ENCODE measurements at regions of chr12 and their contacts with region 1.

Region 1: GRCh38 chr12:125065021-125065795 is at the start of gene AACS:
- DNase-seq: peak; percentile 75
- H3K4me3 ChIP-seq: peak within 1 kb of the TSS; percentile 69 to 84 (median 74)
- H3K27ac ChIP-seq: peak within 1 kb of the TSS; percentile 44
- H3K4me1 ChIP-seq: peaks cover 15% of the 10 kb centered on the region
- H3K27me3 ChIP-seq: no peaks in the 10 kb centered on the region
- CTCF ChIP-seq: peak in 1 of 2 donors; percentile 3
- total RNA-seq, gene AACS: 35.1 to 36.0 TPM

Region 2: DNA sequence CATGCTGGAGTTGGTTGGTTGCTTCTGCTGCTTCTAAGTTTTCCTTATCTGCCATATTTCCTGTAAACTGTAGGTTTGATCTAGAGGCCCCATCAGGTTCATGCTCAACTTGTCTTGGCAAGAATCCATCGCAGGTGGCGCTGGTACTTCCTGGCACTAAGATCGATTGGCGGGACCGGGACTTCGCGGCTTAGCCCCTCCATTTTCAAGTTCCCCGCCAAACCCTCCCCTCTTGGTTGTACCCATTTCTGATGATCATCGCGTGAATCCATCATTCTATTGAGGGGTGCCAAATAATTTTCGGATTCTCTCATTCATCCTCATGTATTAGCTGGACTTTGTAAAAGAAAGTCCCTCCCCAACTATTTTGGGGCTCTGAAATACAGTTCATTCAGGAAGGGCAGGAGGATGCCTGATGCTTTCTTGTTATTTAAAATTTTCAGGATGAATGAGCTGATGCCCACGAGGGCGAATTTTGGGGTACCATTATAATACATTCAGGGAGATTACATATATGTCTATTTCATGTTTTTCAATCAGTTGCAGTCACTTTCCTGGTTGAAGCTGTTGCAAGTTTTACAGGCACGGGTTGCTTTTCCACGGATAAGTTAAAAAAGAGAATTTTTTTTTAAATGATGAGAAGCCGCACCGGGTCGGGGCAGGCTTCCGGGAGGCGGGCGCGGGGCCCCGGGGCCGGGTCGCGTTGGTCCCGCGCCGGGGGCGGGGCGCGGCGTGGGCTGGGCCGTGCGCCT is 72.2 kb before region 1 on chr12:
- CTCF ChIA-PET with region 1: no interaction called
- dilution Hi-C with region 1: no loop called
- in situ Hi-C with region 1: no loop called
- intact Hi-C with region 1: loop called (anchors 2 kb)
- DNase-seq: peak; percentile 68
- H3K4me3 ChIP-seq: peak overlapping the region; percentile 68 to 89 (median 79)
- H3K27ac ChIP-seq: peak overlapping the region; percentile 12
- H3K4me1 ChIP-seq: peaks cover 17% of the 10 kb centered on the region
- H3K27me3 ChIP-seq: no peaks in the 10 kb centered on the region
- CTCF ChIP-seq: peak; percentile 35 to 53

Region 3: DNA sequence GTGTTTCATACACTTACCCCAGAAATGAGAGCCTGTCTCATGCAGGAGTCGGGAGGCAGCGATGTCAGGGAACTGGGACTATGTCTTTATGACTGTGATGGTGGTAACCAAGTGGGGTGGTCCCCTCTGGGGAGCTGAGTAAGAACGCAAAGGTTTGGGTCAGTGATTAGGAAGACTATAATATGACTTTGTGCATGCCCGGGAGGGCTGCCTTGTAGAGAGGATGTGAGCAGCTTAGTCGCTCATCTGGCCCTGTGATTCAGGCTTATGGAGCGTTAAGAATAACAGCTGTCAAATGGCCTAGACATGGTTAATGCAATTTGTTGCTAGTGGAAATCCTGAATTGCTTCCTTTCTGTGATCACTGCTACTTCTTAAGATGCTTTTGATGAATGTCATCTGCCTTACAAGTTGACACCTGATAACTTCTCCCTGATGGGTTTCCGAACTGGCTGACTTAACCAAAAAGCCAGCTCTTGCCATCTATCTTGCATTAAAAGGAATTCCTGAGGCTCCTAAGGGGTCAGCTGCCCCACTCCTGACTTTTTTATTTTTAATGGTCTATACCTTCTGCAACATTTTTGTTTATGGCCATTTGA is 35.3 kb before region 1 on chr12:
- CTCF ChIA-PET with region 1: no interaction called
- dilution Hi-C with region 1: loop called (anchors 5 kb)
- in situ Hi-C with region 1: no loop called
- intact Hi-C with region 1: no loop called
- DNase-seq: no peak
- H3K4me3 ChIP-seq: no peak overlapping the region
- H3K27ac ChIP-seq: no peak overlapping the region
- H3K4me1 ChIP-seq: no peaks in the 10 kb centered on the region
- H3K27me3 ChIP-seq: no peaks in the 10 kb centered on the region
- CTCF ChIP-seq: no peak

Region 4: DNA sequence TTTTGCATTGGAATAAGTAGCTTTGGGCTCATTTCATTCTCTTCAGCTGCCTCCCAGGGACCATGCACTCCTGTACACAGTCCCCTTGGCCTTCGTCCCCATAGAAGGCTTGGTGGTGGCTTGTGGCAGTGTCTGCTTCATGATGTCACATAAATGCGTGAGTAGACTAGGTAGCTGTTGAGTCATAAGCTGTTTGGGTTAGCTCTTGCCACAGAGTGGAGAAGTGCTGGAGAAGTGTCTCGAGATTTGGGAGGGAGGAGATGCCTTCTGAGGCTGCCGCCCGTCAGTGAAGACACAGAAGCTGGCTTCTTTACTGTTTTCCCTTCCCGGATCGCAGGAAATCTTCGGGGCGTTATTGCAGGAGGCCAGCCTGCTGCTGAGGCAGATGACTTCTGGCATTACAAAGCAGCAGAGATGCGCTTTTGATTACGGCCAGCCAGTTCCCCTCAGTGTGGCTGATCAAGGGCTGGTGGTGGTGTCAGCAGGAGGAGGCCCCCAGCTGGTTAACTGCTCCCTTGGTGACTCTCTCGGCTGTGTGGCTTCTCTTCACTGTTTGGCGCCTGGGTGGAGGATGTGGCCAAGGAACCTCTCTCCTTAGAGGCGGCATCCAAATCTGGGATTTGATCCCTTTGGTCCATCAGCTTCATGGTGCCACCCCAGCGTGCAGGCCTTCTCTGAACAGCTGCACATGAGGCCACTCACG is 67.6 kb after region 1 on chr12:
- CTCF ChIA-PET with region 1: no interaction called
- dilution Hi-C with region 1: loop called (anchors 5 kb)
- in situ Hi-C with region 1: no loop called
- intact Hi-C with region 1: no loop called
- DNase-seq: no peak
- H3K4me3 ChIP-seq: no peak overlapping the region
- H3K27ac ChIP-seq: no peak overlapping the region
- H3K4me1 ChIP-seq: no peaks in the 10 kb centered on the region
- H3K27me3 ChIP-seq: no peaks in the 10 kb centered on the region
- CTCF ChIP-seq: no peak

Measured in mammary epithelial cell (primary cell).